Mammary epithelial cell (primary cell): ENCODE measurements at regions of chr6 and their contacts with region 1.

Region 1: DNA sequence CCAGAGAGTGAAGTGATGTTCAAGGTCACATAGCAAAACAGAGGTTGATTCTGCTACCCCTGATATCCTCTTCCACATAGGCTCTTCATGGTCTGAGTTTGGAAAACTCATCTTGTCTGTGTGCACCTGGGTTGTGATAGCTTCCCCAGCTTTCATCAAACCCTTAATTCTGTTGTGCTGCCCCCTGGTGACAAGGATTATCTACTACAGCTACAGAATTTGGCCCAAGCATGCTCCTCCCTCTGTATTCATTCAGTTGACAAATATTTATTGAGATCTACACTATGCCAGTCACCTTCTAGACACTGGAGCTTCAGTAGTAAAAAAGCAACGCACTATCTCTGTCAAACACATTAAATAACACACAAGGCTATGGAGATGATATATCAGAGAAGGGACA is 50.4 kb downstream of the SMPDL3A start:
- DNase-seq: peak; percentile 48
- H3K4me3 ChIP-seq: no peak overlapping the region
- H3K27ac ChIP-seq: no peak overlapping the region
- H3K4me1 ChIP-seq: no peaks in the 10 kb centered on the region
- H3K27me3 ChIP-seq: no peaks in the 10 kb centered on the region
- CTCF ChIP-seq: peak; percentile 61 to 71

Region 2: GRCh38 chr6:122491919-122492555 is 347.4 kb before region 1 on chr6:
- CTCF ChIA-PET with region 1: no interaction called
- dilution Hi-C with region 1: no loop called
- in situ Hi-C with region 1: loop called (anchors 10 to 25 kb)
- intact Hi-C with region 1: loop called (anchors 1 kb)
- DNase-seq: peak; percentile 60
- H3K4me3 ChIP-seq: no peak overlapping the region
- H3K27ac ChIP-seq: no peak overlapping the region
- H3K4me1 ChIP-seq: no peaks in the 10 kb centered on the region
- H3K27me3 ChIP-seq: no peaks in the 10 kb centered on the region
- CTCF ChIP-seq: peak; percentile 91 to 93

Region 3: GRCh38 chr6:122740936-122741335 is 98.5 kb before region 1 on chr6:
- CTCF ChIA-PET with region 1: interaction called, 22 read pairs
- dilution Hi-C with region 1: loop called (anchors 5 kb)
- in situ Hi-C with region 1: loop called (anchors 5 kb)
- intact Hi-C with region 1: loop called (anchors 1 kb)
- DNase-seq: no peak
- H3K4me3 ChIP-seq: no peak overlapping the region
- H3K27ac ChIP-seq: no peak overlapping the region
- H3K4me1 ChIP-seq: peaks cover 4% of the 10 kb centered on the region
- H3K27me3 ChIP-seq: no peaks in the 10 kb centered on the region
- CTCF ChIP-seq: no peak

Region 4: GRCh38 chr6:122749451-122750050 is 89.9 kb before region 1 on chr6:
- CTCF ChIA-PET with region 1: interaction called, 7 read pairs
- dilution Hi-C with region 1: loop called (anchors 5 kb)
- in situ Hi-C with region 1: loop called in 1 of 2 experiments (anchors 5 kb)
- intact Hi-C with region 1: loop called (anchors 1 kb)
- DNase-seq: no peak
- H3K4me3 ChIP-seq: no peak overlapping the region
- H3K27ac ChIP-seq: no peak overlapping the region
- H3K4me1 ChIP-seq: no peaks in the 10 kb centered on the region
- H3K27me3 ChIP-seq: no peaks in the 10 kb centered on the region
- CTCF ChIP-seq: no peak

Region 5: GRCh38 chr6:122789182-122790027 is 50.1 kb before region 1 on chr6 and contains the start of gene SMPDL3A:
- CTCF ChIA-PET with region 1: interaction called, 7 read pairs
- dilution Hi-C with region 1: no loop called
- in situ Hi-C with region 1: no loop called
- intact Hi-C with region 1: loop called (anchors 5 kb)
- DNase-seq: peak; percentile 74
- H3K4me3 ChIP-seq: peak within 1 kb of the TSS; percentile 61 to 71 (median 68)
- H3K27ac ChIP-seq: peak within 1 kb of the TSS; percentile 63
- H3K4me1 ChIP-seq: peaks cover 19% of the 10 kb centered on the region
- H3K27me3 ChIP-seq: no peaks in the 10 kb centered on the region
- CTCF ChIP-seq: peak; percentile 10 to 49
- total RNA-seq, gene SMPDL3A: 4.5 to 7.3 TPM